Ascending aorta (tissue), 2 donors: ENCODE measurements at regions of chr19 and their contacts with region 1.

Region 1: GRCh38 chr19:49590071-49590970 is 661 bp upstream of the PRR12 start:
- DNase-seq: peak; percentile 87 to 97
- H3K4me3 ChIP-seq: peak overlapping the region; percentile 81 to 91
- H3K27ac ChIP-seq: peak overlapping the region; percentile 82 to 87
- H3K4me1 ChIP-seq: peaks cover 2 to 12% of the 10 kb centered on the region in 2 donors
- H3K27me3 ChIP-seq: no peaks in the 10 kb centered on the region
- CTCF ChIP-seq: peak in 1 of 3 experiments; percentile 6

Region 2: DNA sequence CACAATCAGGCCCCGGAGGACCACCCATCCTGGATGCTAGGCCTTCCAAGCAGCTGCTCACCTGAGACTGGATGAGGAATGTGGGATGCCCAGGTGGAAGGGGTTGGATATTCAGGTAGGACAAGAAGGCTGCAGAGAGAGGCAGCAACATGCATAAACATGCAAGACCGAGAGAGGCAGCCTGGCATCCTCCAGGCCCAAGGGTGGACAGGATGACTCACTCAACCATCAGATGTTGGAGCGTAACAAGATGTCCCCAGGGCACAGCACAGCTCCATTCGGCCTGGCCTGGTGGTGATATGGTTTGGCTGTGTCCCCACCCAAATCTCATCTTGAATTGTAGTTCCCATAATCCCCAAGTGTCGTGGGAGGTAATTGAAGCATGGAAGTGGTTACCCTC is 1536.5 kb before region 1 on chr19:
- intact Hi-C with region 1: no loop called
- DNase-seq: no peak
- H3K4me3 ChIP-seq: no peak overlapping the region
- H3K27ac ChIP-seq: no peak overlapping the region
- H3K4me1 ChIP-seq: no peaks in the 10 kb centered on the region
- H3K27me3 ChIP-seq: no peaks in the 10 kb centered on the region
- CTCF ChIP-seq: no peak

Region 3: DNA sequence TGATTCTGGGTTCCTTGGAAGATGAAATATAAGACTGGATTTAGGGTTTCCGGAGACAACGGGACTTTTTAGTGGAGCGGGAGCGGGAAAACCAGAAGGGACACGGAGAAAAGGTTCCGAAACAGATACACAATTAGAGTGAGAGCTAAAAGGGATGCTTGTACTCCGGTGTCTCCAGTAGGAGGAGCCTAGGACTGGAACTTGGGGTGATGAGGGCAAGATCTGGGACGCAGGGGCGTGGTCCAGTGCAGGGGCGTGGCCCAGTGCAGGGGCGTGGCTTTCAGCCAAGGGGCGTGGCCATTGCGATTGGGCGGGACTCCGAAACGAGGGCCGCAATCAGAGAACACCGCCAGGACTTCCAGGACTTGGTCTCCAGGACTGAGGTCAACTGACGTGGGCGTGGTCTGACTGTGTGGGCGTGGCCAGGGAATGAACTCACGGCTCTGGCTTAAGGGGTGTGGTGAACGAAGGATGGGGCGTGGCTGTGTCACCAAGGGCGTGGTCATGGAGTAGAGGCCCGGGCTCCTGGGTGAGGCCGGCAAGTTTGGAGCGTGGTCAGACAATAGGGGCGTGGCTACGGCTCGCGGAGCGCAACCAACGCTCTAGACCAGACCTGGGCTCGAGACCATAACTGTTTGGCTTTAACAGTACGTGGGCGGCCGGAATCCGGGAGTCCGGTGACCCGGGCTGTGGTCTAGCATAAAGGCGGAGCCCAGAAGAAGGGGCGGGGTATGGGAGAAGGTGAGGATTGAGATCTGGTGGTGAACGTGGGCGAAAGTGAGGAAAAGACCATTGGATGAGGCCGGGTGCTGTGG is 226.8 kb before region 1 on chr19 and contains the start of gene DKKL1:
- intact Hi-C with region 1: loop called (anchors 5 kb)
- DNase-seq: peak; percentile 98 to 99
- H3K4me3 ChIP-seq: peak within 1 kb of the TSS; percentile 45 to 76
- H3K27ac ChIP-seq: peak within 1 kb of the TSS; percentile 88 to 89
- H3K4me1 ChIP-seq: peaks cover 0 to 7% of the 10 kb centered on the region in 2 donors
- H3K27me3 ChIP-seq: no peaks in the 10 kb centered on the region
- CTCF ChIP-seq: no peak
- total RNA-seq, gene DKKL1: not detected

Region 4: DNA sequence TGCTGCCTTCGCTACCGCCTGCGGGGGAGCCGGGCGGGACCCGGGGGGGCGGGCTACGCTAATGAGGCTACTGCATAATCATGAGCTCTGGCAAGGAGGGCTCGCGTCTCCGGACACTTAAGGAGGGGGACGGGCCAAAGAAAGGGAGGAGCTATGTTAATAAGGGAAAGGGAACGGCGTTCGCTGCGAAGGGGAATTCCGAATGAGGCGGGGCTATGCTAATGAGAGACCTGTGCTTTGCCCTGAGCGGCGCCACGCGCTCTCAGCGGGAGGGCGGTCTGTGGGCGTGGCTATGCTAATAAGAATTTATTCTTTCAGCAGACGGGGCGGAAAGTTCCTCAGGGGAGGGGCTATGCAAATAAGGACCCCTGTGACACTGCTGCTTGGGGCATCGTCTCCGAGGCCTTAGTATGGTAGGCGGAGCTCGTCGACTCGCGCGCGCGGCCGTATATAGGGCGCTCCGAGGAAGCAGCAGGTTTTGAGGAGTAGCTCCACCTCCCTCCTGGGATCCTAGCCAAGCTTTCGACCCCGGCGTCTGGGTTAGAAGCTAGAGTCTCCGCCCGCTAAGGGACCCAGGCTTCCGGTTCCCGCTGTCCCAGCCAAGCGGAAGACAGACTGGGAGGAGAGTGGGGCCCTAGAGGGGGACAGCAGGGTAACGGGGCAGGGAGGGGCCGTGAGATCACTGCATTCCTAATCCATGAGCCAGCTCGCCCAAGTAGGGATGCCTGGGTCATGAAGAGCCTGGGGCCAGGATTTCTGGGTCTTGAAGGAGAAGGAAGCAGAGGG is 50.0 kb after region 1 on chr19 and contains the start of gene RRAS:
- intact Hi-C with region 1: loop called (anchors 1 kb)
- DNase-seq: peak; percentile 99 to 100
- H3K4me3 ChIP-seq: peak within 1 kb of the TSS; percentile 80 to 87
- H3K27ac ChIP-seq: peak within 1 kb of the TSS; percentile 99 to 100
- H3K4me1 ChIP-seq: peaks cover 20 to 24% of the 10 kb centered on the region in 2 donors
- H3K27me3 ChIP-seq: no peaks in the 10 kb centered on the region
- CTCF ChIP-seq: no peak
- total RNA-seq, gene RRAS: 161 TPM

Region 5: DNA sequence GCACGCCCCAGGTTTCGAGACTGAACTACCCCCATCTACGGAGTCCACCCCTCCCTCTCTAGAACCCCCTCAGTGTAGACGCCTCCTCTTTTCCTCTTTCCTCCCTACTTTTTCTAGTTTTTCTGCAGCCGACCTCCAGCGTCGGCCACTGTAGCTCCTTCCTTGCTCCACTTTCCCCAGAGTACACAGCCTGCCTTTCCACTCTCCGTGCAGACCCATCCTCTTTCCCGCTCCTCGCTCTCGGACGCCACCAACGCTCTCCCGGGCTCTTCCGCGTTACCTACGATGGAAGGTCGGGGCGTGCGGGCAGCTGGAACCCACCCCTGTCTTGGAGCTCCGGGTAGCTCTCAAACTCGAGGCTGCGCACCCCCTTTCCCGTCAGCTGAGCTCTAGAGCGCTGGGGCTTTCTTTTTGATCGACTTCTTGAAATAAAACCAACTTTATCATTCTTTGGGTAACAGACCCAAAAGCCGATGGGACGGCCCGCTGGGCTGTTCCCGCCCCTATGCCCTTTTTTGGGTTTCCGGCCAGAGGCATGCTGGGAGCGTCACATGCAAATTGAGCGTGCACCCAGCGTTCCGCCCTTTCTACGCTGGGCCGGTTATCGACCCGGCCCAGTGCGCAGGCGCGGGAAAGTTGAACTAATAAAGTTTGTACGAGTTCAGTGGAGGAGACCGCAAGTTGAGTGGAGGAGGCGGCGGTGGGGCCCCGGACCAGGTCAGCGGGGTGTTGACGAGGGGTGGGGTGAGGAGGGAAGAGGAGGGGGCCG is 75.2 kb after region 1 on chr19 and contains the starts of genes BCL2L12 and IRF3:
- intact Hi-C with region 1: loop called (anchors 1 kb)
- DNase-seq: peak; percentile 88 to 98
- H3K4me3 ChIP-seq: peak within 1 kb of the TSS; percentile 83
- H3K27ac ChIP-seq: peak within 1 kb of the TSS; percentile 87 to 89
- H3K4me1 ChIP-seq: peaks cover 0 to 18% of the 10 kb centered on the region in 2 donors
- H3K27me3 ChIP-seq: no peaks in the 10 kb centered on the region
- CTCF ChIP-seq: no peak
- total RNA-seq, gene BCL2L12: 0.64 TPM
- total RNA-seq, gene IRF3: 75.9 TPM

Region 6: GRCh38 chr19:49869441-49870176 is 279.3 kb after region 1 on chr19:
- intact Hi-C with region 1: loop called (anchors 5 kb)
- DNase-seq: peak; percentile 95 to 98
- H3K4me3 ChIP-seq: peak overlapping the region; percentile 72 to 74
- H3K27ac ChIP-seq: peak overlapping the region; percentile 93 to 97
- H3K4me1 ChIP-seq: peaks cover 19 to 32% of the 10 kb centered on the region in 2 donors
- H3K27me3 ChIP-seq: no peaks in the 10 kb centered on the region
- CTCF ChIP-seq: no peak